ENCODE measurements at regions of chr11 and their contacts with region 1.

Region 1: GRCh38 chr11:115324581-115325432 is 179.4 kb downstream of the CADM1 start:
- DNase-seq: peak; percentile 45
- CTCF ChIP-seq: peak; percentile 79

Region 2: GRCh38 chr11:115598257-115598901 is 273.6 kb after region 1 on chr11:
- in situ Hi-C with region 1: no loop called
- DNase-seq: no peak
- CTCF ChIP-seq: no peak

Region 3: DNA sequence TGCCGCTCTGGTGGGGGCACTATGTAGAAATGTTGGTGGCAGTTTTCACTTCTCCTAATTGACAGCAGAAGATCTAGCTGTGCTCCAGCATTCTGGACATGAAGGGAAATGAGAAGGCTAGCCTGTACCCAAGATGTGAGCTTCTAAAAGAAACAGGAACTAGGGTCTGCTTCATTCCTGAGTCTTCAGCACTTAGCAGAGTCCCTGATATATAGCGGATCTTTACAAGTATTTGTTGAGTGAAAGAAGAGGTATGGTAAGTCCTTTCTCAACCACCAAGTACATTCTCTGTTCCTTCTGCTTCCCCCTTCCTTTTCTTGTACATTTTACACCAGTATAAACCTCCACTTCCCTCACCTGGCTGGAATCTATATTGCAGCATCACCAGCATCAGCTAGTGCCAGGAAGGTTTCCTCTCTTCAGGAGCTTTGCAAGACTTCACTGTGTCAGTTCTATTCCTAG is 587.7 kb after region 1 on chr11:
- in situ Hi-C with region 1: loop called (anchors 25 kb)
- DNase-seq: no peak
- CTCF ChIP-seq: peak; percentile 53

Region 4: DNA sequence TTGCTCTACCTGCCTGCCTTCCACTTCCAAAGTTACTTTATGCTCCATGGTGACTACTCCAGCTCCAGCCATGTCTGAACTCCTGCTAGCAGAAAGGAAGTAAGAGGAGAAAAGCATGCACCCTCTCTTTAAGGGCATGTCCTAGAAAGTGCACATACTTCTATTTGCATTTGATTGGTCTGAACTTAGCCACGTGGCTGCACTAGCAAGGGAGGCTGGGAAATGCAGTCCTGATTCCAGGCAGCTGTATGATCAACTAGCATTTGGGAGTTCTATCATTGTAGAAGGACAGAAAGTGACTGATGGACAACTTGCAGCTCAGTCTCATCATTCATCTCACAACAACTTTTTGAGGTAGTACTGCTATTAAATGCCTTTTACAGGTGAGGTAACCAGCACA is 932.3 kb after region 1 on chr11:
- in situ Hi-C with region 1: loop called (anchors 25 kb)
- DNase-seq: no peak
- CTCF ChIP-seq: no peak